Activated CD4-positive, alpha-beta T cell treated with anti-CD3 and anti-CD28 coated beads for 36 hours (primary cell): ENCODE measurements at regions of chr4 and their contacts with region 1.

Region 1: DNA sequence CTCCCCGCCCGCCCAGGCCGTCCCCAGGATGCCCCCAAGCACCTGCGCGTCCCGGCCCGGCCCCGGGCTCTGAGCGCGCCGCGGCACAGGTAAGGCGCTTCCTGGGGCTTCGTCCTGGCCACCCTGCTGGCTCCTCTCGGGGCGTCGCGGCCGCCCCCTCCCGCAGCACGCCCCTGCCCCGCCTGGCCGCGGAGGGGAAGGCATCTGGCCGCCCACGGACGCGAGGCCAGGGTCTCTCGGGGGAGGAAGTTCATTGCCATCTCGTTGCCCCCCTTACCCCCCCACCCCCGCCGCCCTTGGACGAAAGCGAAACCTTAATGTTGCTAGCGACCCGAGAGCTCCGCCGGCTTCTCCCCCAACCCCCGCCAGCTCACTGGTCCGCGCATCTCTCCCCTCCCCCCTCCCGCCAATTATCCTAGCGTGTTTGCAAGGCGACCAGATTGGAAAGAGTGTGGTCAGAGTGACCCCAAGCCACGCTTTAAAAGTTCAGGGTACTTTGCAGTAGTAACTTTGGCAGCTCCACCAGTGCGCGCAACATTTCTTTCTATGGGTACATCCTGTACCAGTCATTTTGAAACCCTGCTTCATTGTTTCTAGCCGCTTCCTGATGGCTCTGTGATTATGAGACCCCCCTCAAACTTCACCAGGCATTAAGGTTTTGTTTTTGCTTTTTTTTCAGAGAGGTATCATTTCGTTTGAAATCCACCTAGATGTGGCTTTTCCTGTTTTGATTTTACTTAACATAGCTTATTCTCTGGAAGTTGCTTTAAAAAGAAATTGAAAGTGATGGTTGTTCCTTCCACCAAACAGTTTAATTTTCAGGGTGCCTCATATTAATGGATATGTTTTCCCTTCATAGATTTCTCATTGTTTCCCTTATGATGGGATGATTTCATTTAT is 626 bp downstream of the TBC1D1 start:
- DNase-seq: peak; percentile 73
- ATAC-seq: peak; percentile 78
- H3K4me3 Mint-ChIP-seq: peak overlapping the region; percentile 78
- H3K27ac Mint-ChIP-seq: peak overlapping the region; percentile 93
- H3K4me1 Mint-ChIP-seq: peaks cover 35% of the 10 kb centered on the region
- H3K27me3 Mint-ChIP-seq: peaks cover 3% of the 10 kb centered on the region

Region 2: DNA sequence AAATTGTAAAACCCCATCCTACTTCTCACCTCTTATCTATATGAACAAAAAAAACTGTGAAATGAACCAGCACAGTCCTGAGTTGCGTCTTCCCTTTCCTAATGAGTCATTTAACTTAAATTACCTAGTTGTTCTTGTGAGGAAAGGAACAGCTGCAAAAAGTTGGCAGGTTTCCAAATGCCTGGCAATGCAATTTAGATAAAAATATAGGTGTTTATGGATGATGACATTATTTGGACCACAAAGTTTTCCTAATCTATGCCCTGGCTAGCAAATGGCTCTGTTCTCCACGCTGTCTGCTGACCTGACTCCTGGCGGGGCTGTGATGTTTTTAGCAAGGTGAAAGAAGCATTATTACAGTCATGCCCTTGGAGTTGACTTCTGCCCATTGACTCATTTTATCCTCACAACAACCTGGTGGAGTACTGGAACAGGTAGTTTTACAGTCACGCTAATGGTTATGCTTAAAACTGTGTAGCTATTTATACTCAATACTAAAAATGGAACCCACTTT is 175.6 kb before region 1 on chr4:
- CTCF ChIA-PET with region 1: no interaction called
- POLR2A ChIA-PET with region 1: no interaction called
- intact Hi-C with region 1: no loop called
- DNase-seq: peak; percentile 70
- ATAC-seq: peak; percentile 87
- H3K4me3 Mint-ChIP-seq: no peak overlapping the region
- H3K27ac Mint-ChIP-seq: peak overlapping the region; percentile 34
- H3K4me1 Mint-ChIP-seq: peaks cover 18% of the 10 kb centered on the region
- H3K27me3 Mint-ChIP-seq: no peaks in the 10 kb centered on the region

Region 3: DNA sequence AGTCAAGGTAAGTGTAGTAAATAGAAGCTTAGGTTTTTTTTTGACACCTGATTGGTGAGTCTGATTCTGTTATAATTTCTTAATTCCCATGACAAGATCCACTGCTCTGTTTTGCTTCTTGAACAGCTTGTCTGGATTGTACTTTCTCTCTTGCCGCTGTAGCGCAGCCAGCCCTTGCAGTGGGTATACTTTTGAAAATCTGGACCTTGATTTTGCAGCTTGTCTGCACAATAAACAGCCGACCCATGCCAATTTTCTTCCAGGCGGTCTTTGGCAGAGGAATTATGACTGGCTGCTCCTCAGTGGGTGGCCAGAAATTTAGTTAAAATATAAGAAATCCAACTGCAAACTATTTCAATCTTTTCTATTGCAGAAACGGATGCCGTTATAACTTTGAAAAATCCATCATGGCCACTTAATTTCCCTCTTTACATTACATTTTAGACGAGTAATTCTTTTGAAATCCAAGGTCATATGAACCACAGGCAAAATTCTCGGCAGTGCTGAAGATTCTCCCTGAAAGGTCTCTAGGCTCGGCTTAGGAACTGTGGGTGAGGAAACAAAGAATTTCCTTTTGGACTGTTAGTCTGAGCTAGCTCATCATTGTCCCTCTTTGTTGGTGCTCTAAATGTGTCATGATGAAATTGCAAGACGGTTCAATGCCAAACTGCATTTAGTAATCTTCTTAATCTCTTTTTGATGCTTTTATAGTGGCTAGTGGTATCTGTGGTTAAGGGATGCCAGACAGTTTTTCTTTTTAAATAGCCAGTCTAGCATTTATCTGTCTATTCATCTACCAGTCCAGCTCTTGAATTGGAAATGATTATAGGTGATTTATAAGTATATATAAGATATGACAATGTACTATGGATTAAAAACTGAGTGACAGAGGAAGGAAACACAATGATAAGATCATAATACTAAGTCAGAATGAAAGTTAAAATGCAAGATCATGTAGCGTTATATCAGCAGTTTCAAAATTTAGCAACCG is 37.2 kb after region 1 on chr4:
- CTCF ChIA-PET with region 1: interaction called, 3 read pairs
- POLR2A ChIA-PET with region 1: interaction called, 4 read pairs
- intact Hi-C with region 1: loop called (anchors 1 kb)
- DNase-seq: no peak
- ATAC-seq: peak; percentile 64
- H3K4me3 Mint-ChIP-seq: no peak overlapping the region
- H3K27ac Mint-ChIP-seq: no peak overlapping the region
- H3K4me1 Mint-ChIP-seq: peaks cover 28% of the 10 kb centered on the region
- H3K27me3 Mint-ChIP-seq: no peaks in the 10 kb centered on the region

Region 4: DNA sequence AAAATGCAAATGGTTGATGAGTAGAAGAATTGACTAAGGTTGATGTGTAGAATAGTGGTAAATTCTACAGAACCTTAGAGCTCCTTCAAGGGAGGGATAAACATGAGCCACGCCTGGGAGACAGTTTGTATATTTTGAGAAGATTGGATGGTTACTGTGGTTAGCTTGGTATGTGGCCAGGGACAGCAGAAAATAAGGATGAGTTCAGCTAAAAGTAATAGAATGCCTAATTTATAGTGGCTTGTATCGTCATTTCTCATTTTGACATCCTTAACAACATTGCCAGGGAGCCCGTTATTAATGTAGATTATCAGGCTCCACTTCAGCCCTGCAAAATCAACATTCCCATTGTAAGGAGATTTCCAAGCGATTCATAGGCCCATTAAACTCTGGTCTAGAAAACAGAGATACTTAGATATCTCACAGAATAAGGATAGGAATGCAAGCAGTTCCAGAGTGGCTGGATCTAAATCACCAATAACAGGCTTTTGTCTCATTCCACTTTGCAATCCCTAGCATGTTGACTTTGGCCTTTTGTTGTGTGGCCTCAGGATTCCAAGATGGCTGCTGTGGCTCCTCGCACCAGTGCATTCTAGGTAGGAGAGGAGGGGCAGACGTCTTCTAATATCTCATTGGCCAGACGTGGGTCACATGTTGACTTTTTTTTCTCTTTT is 62.2 kb after region 1 on chr4:
- CTCF ChIA-PET with region 1: no interaction called
- POLR2A ChIA-PET with region 1: no interaction called
- intact Hi-C with region 1: loop called (anchors 1 kb)
- DNase-seq: peak; percentile 25
- ATAC-seq: peak; percentile 57
- H3K4me3 Mint-ChIP-seq: no peak overlapping the region
- H3K27ac Mint-ChIP-seq: no peak overlapping the region
- H3K4me1 Mint-ChIP-seq: peaks cover 15% of the 10 kb centered on the region
- H3K27me3 Mint-ChIP-seq: no peaks in the 10 kb centered on the region